Psoas muscle (tissue), 8 donors: ENCODE measurements at regions of chr3 and their contacts with region 1.

Region 1: DNA sequence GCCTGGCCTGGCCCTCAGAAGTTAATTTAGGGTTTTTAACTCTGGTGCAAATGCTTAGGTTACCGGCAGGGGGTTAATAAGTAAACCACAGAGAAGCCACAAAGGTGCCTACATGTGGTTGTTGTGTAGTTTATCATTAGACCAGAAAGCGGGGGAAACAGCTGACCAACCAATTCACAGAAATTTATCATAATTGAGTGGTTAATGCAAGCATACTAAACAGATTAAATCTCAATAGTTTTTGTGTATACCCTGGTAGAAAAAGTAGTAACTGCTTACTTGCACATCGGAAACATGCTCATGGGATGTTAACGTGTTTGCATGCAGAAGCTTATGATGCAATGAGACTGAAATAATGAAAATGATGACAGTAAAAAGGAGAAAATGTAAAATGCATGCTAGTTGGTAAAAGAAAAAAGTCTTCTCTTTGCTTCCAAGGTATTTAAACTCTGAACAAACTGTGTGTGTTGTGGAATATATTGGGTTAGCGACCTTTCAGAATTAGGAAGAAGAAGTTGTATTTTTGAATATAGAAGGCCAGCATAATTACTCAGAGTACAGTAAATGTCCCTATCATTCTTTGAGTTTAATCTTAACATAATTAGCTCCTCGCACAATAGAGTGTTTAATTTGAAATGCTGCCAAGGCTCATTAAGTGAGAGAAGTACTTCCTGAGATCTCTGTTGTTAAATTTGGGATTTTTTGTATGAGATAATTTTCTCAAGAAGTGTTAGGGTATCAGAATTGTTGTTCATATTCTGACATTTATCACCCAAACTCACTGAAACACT is 316.2 kb downstream of the PTPRG start:
- DNase-seq: no peak
- ATAC-seq: no peak
- H3K4me3 ChIP-seq: no peak overlapping the region
- H3K27ac ChIP-seq: no peak overlapping the region
- H3K4me1 ChIP-seq: peaks cover 37% of the 10 kb centered on the region
- H3K27me3 ChIP-seq: no peaks in the 10 kb centered on the region
- CTCF ChIP-seq: no peak

Region 2: DNA sequence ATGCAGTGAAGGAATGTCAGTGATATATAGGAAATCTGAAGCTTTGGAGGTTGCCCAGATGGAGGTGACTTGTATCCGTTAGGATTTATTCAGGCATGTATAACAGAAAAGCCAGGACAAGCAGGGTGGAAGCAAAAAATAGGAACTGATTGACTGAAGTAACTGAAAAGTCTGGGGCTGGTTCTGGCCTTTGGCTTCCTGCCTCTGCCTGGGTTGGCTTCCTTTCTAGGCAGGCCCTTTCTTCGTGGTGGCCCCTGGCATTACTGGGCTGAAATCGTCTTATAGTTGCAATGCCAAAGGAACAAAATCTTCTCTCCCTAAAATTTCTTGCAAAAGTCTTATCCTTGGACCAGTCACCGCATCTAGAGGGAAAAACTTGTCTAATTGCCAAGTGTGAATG is 69.9 kb after region 1 on chr3:
- intact Hi-C with region 1: no loop called
- DNase-seq: peak in 1 of 2 donors; percentile 25
- ATAC-seq: no peak
- H3K4me3 ChIP-seq: no peak overlapping the region
- H3K27ac ChIP-seq: no peak overlapping the region
- H3K4me1 ChIP-seq: peaks cover 44% of the 10 kb centered on the region
- H3K27me3 ChIP-seq: no peaks in the 10 kb centered on the region
- CTCF ChIP-seq: no peak

Region 3: DNA sequence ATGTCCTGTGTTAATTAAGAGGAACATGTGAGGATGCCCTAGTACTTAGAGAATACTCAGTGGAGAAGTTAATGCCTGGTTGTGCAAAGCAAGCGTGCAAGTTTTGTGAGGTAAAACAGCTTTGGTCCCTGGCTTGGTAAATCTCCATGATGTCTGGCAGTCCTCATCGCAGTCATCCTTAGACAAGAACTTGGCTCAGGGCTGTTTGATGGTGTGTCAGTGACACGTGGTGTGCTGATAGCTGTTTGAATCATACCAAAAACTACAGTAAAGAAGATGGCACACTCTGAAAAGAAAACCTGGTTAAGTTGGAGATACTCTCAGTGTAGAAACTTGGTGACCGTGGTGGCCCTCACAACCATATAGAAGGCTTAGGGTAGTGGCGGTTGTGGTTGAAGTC is 134.1 kb after region 1 on chr3:
- intact Hi-C with region 1: loop called in 1 of 2 experiments (anchors 1 kb)
- DNase-seq: no peak
- ATAC-seq: no peak
- H3K4me3 ChIP-seq: no peak overlapping the region
- H3K27ac ChIP-seq: no peak overlapping the region
- H3K4me1 ChIP-seq: peaks cover 3% of the 10 kb centered on the region
- H3K27me3 ChIP-seq: no peaks in the 10 kb centered on the region
- CTCF ChIP-seq: no peak